Activated CD4-positive, alpha-beta memory T cell treated with anti-CD3 and anti-CD28 coated beads for 36 hours (primary cell): ENCODE measurements at regions of chr14 and their contacts with region 1.

Region 1: GRCh38 chr14:23910101-23910875 is 43.3 kb upstream of the DHRS4 start:
- DNase-seq: peak; percentile 42
- H3K4me3 Mint-ChIP-seq: no peak overlapping the region
- H3K27ac Mint-ChIP-seq: no peak overlapping the region
- H3K4me1 Mint-ChIP-seq: no peaks in the 10 kb centered on the region
- H3K27me3 Mint-ChIP-seq: peaks cover 14% of the 10 kb centered on the region

Region 2: GRCh38 chr14:23665375-23666192 is 244.7 kb before region 1 on chr14:
- CTCF ChIA-PET with region 1: interaction called, 16 read pairs
- POLR2A ChIA-PET with region 1: no interaction called
- intact Hi-C with region 1: no loop called
- DNase-seq: peak; percentile 23
- H3K4me3 Mint-ChIP-seq: no peak overlapping the region
- H3K27ac Mint-ChIP-seq: no peak overlapping the region
- H3K4me1 Mint-ChIP-seq: no peaks in the 10 kb centered on the region
- H3K27me3 Mint-ChIP-seq: no peaks in the 10 kb centered on the region